Caco-2 (cell line): ENCODE measurements at regions of chr2 and their contacts with region 1.

Region 1: DNA sequence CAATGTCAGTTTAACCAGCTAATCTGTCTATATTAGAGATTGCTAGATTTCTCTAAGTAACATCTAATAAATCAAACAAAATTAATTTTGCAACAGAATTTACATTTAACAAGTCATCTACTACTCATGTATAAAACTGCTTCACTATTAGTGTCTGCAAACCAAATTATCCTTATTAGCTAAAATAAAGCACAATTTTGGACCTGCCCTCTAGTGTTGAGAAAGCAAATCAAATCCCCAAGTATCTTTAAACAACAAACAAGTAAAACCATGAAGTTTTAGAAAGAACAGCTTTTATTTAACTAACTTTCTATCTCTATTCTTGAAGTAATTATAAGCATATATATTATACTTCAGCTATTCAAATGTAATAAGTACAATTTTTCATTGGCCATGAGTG is 113.1 kb upstream of the SP3 start:
- DNase-seq: no peak
- H3K4me3 ChIP-seq: no peak overlapping the region
- H3K4me3 Mint-ChIP-seq: no peak overlapping the region
- H3K27ac Mint-ChIP-seq: peak overlapping the region; percentile 21
- H3K4me1 ChIP-seq: peaks cover 43% of the 10 kb centered on the region
- H3K4me1 Mint-ChIP-seq: peaks cover 40% of the 10 kb centered on the region
- H3K27me3 ChIP-seq: no peaks in the 10 kb centered on the region
- H3K27me3 Mint-ChIP-seq: no peaks in the 10 kb centered on the region
- CTCF ChIP-seq: peak in 1 of 2 experiments; percentile 36

Region 2: GRCh38 chr2:173884025-173884802 is 194.1 kb before region 1 on chr2:
- CTCF ChIA-PET with region 1: interaction called, 3 read pairs
- POLR2A ChIA-PET with region 1: no interaction called
- intact Hi-C with region 1: loop called (anchors 5 kb)
- DNase-seq: peak; percentile 56 to 64
- H3K4me3 ChIP-seq: no peak overlapping the region
- H3K4me3 Mint-ChIP-seq: no peak overlapping the region
- H3K27ac Mint-ChIP-seq: no peak overlapping the region
- H3K4me1 ChIP-seq: no peaks in the 10 kb centered on the region
- H3K4me1 Mint-ChIP-seq: no peaks in the 10 kb centered on the region
- H3K27me3 ChIP-seq: no peaks in the 10 kb centered on the region
- H3K27me3 Mint-ChIP-seq: no peaks in the 10 kb centered on the region
- CTCF ChIP-seq: peak; percentile 62 to 83

Region 3: GRCh38 chr2:174356347-174356746 is 278.1 kb after region 1 on chr2:
- CTCF ChIA-PET with region 1: no interaction called
- POLR2A ChIA-PET with region 1: no interaction called
- intact Hi-C with region 1: no loop called
- DNase-seq: no peak
- H3K4me3 ChIP-seq: no peak overlapping the region
- H3K4me3 Mint-ChIP-seq: no peak overlapping the region
- H3K27ac Mint-ChIP-seq: no peak overlapping the region
- H3K4me1 ChIP-seq: no peaks in the 10 kb centered on the region
- H3K4me1 Mint-ChIP-seq: no peaks in the 10 kb centered on the region
- H3K27me3 ChIP-seq: no peaks in the 10 kb centered on the region
- H3K27me3 Mint-ChIP-seq: no peaks in the 10 kb centered on the region
- CTCF ChIP-seq: no peak